ENCODE measurements at regions of chr18 and their contacts with region 1.

Region 1: DNA sequence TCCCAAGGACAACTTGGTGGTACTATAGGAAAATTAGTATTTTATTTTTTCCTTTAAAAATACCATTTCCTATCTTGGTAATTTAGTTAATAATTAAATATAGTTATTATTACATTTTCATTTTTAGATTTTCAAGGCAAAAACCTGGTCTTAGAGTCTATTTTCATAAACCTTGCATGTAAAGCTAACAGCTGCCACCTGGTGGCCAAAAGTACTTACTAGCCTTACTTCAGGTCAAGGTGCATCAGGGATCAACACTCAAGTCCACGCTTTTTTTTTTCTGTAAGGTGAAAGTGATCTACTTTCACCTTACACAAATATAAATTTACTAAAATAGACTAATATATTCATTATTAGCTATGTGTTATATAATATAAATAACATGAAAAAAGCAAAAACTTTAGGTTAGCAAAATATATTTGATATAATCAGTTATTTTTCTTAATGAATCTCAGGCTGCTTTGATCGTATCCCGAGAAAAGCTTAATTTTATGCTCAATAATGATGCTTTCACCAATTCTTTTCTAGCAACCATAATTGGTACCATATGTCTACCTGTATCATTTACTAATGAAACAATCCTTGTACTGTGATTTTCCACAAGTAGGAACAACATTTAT is 62.5 kb downstream of the RELCH start:
- DNase-seq: peak; percentile 49
- H3K4me3 ChIP-seq: no peak overlapping the region
- H3K27ac ChIP-seq: no peak overlapping the region
- H3K27me3 ChIP-seq: no peaks in the 10 kb centered on the region
- CTCF ChIP-seq: peak; percentile 85

Region 2: DNA sequence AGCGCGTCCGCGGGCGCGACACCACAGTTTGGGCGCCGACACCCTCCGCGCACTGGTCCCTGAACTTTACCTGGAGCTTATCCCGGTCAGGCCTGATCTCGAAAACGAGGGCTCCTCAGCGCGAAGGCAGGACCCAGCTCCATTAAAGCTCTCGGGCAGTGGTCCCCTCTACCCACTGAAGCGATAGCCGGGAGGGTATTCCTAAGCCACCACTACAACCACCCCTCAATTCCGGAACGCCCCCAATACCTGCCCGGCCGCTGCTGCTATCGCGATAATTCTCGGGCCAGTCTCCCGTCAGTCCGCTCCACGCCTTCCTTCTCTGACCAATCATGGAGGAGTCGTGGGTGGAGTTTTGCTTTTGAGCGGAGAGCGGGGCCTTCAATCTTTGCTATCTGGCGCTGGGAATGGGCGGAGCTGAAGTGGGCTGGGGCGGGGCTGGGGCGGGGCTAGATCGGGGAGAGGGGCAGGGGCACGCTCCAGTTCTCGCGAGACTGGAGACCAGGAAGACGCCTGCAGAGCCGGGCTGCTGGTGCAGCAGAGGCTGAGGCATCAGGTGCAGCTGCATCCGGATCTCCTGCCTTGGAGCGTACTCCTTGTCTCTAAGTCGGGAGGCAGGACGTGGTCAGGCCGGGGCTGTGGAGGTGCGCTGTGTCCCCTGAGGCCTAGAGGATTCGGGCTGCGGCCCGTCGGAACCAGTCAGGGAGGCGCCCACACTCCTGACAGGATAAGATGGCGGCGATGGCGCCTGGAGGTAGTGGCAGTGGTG is 62.6 kb before region 1 on chr18 and contains the starts of genes PIGN and RELCH:
- CTCF ChIA-PET with region 1: interaction called, 114 read pairs
- POLR2A ChIA-PET with region 1: no interaction called
- DNase-seq: peak; percentile 96
- H3K4me3 ChIP-seq: peak within 1 kb of the TSS; percentile 97
- H3K27ac ChIP-seq: peak within 1 kb of the TSS; percentile 49
- H3K27me3 ChIP-seq: no peaks in the 10 kb centered on the region
- CTCF ChIP-seq: no peak
- polyA plus RNA-seq, gene PIGN: 25.1 and 33.7 TPM in 2 replicates
- polyA plus RNA-seq, gene RELCH: 14.5 and 20.3 TPM in 2 replicates

Region 3: GRCh38 chr18:62224229-62224628 is 25.4 kb before region 1 on chr18:
- CTCF ChIA-PET with region 1: interaction called, 16 read pairs
- POLR2A ChIA-PET with region 1: no interaction called
- DNase-seq: no peak
- H3K4me3 ChIP-seq: no peak overlapping the region
- H3K27ac ChIP-seq: no peak overlapping the region
- H3K27me3 ChIP-seq: no peaks in the 10 kb centered on the region
- CTCF ChIP-seq: no peak

Region 4: GRCh38 chr18:62264984-62265383 is 15.4 kb after region 1 on chr18:
- CTCF ChIA-PET with region 1: interaction called, 27 read pairs
- POLR2A ChIA-PET with region 1: no interaction called
- DNase-seq: no peak
- H3K4me3 ChIP-seq: no peak overlapping the region
- H3K27ac ChIP-seq: no peak overlapping the region
- H3K27me3 ChIP-seq: no peaks in the 10 kb centered on the region
- CTCF ChIP-seq: no peak

Measured in AG04450 (cell line).